GM13976 (cell line): ENCODE measurements at regions of chr3 and their contacts with region 1.

Region 1: GRCh38 chr3:40580494-40581091 is 55.8 kb downstream of the ZNF621 start:
- DNase-seq: peak; percentile 62
- CTCF ChIP-seq: peak; percentile 94

Region 2: DNA sequence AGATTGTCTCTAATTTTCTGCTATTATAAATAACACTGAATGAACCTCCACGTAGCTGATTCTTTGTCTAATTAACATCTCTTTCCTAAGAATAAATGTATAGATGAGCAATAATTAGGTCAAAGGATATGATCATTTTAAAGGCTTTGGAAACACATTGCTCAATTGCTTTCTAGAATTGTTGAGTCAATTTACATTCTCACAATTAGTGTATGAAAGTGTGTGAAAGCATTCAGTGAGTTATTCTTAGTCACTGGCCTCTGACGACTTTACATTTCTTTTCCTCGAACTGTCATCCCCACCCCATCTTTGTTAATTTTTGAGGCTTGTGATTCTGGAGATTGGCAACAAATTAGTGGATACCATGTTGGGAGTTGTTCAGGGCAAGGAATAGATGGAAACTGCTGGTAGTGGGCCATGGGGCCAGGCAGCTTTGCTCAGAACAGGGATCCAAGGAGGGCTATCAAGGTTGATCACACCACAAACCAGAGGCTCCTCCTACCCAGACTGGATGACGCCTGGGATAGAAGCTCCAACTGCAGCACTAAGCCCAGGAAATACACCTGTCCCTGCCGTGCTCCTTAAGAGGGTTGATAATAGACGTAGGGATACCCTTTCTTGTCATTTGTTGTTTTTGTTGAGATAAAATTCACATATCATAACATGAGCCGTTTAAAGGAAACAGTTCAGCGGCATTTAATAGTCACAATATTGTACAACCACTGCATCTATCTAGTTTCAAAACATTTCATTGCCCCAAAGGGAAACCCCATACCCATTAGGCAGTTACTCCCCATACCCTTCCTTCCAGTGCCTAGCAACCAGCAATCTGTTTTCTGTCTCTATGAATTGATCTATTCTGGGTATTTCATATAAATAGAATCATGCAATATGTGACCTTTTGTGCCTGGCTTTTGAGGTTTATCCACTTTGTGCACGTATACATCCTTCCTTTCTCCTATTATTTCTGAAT is 243.2 kb before region 1 on chr3:
- in situ Hi-C with region 1: loop called (anchors 25 kb)
- DNase-seq: peak; percentile 41
- CTCF ChIP-seq: no peak

Region 3: DNA sequence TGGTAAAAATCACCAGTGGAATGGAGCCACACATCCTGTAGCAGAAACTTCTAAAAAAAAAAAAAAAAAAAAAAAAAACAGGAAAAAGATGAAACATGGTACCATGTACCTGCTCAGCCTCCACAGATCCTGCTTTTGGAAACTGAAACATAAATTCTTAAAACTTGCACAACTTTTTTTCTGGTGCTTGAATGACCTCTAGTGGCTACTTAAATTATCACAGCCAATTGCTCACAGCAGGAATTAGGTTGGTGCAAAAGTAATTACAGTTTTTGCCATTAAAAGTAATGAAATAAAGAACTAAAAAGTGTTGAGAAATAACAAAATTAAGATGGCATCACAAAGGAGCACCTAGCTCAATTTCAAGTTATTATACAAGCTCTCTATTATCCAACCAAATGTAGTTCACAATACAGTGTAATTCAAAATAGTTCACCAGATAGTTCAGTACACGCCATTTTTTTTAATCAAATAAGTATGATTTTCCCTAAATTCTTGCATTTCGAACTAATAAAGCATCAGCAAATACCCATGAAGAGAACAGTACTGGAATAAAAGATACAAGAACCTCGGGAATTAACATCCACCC is 1300.7 kb after region 1 on chr3:
- in situ Hi-C with region 1: loop called (anchors 10 kb)
- DNase-seq: peak; percentile 39
- CTCF ChIP-seq: peak; percentile 61